Caco-2 (cell line): ENCODE measurements at regions of chr3 and their contacts with region 1.

Region 1: GRCh38 chr3:186614597-186615483 is 2.0 kb downstream of the AHSG start:
- DNase-seq: peak; percentile 75 to 87
- H3K4me3 ChIP-seq: peak overlapping the region; percentile 33
- H3K4me3 Mint-ChIP-seq: peak overlapping the region; percentile 6
- H3K27ac Mint-ChIP-seq: peak overlapping the region; percentile 6
- H3K4me1 ChIP-seq: peaks cover 14% of the 10 kb centered on the region; the same call in 1 of the 2 replicates
- H3K4me1 Mint-ChIP-seq: peaks cover 26% of the 10 kb centered on the region
- H3K27me3 ChIP-seq: no peaks in the 10 kb centered on the region
- H3K27me3 Mint-ChIP-seq: no peaks in the 10 kb centered on the region
- CTCF ChIP-seq: peak; percentile 93 to 94

Region 2: GRCh38 chr3:186589121-186589520 is 25.7 kb before region 1 on chr3:
- CTCF ChIA-PET with region 1: interaction called, 21 read pairs
- POLR2A ChIA-PET with region 1: no interaction called
- intact Hi-C with region 1: loop called (anchors 1 kb)
- DNase-seq: peak in 1 of 2 experiments; percentile 43
- H3K4me3 ChIP-seq: no peak overlapping the region
- H3K4me3 Mint-ChIP-seq: no peak overlapping the region
- H3K27ac Mint-ChIP-seq: peak overlapping the region; percentile 71
- H3K4me1 ChIP-seq: peaks cover 54% of the 10 kb centered on the region
- H3K4me1 Mint-ChIP-seq: peaks cover 19% of the 10 kb centered on the region
- H3K27me3 ChIP-seq: no peaks in the 10 kb centered on the region
- H3K27me3 Mint-ChIP-seq: no peaks in the 10 kb centered on the region
- CTCF ChIP-seq: peak; percentile 40 to 56

Region 3: DNA sequence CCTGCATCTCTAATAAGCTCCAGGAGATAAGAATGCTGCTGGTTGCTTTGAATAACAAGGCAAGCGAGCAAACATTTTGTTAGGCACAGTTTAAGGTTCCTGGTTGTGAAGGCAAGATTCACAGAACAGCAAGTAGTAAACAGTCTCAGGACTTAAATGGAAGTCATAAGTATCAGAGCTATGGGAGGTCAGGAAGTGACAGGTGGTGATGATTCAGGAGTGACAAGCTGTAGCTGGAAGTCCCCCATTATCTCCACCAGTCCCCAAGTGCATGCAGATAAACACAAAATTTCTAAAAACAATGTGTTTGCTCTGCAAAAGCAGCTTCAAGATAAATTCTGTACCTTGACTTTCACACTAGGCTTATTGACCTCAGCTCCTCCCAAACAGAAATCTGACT is 28.7 kb after region 1 on chr3:
- CTCF ChIA-PET with region 1: no interaction called
- POLR2A ChIA-PET with region 1: no interaction called
- intact Hi-C with region 1: no loop called
- DNase-seq: no peak
- H3K4me3 ChIP-seq: no peak overlapping the region
- H3K4me3 Mint-ChIP-seq: no peak overlapping the region
- H3K27ac Mint-ChIP-seq: no peak overlapping the region
- H3K4me1 ChIP-seq: no peaks in the 10 kb centered on the region
- H3K4me1 Mint-ChIP-seq: no peaks in the 10 kb centered on the region
- H3K27me3 ChIP-seq: no peaks in the 10 kb centered on the region
- H3K27me3 Mint-ChIP-seq: no peaks in the 10 kb centered on the region
- CTCF ChIP-seq: no peak

Region 4: GRCh38 chr3:186679151-186679550 is 64.3 kb after region 1 on chr3:
- CTCF ChIA-PET with region 1: interaction called, 12 read pairs
- POLR2A ChIA-PET with region 1: no interaction called
- intact Hi-C with region 1: no loop called
- DNase-seq: no peak
- H3K4me3 ChIP-seq: no peak overlapping the region
- H3K4me3 Mint-ChIP-seq: no peak overlapping the region
- H3K27ac Mint-ChIP-seq: no peak overlapping the region
- H3K4me1 ChIP-seq: peaks cover 17% of the 10 kb centered on the region
- H3K4me1 Mint-ChIP-seq: peaks cover 14% of the 10 kb centered on the region
- H3K27me3 ChIP-seq: no peaks in the 10 kb centered on the region
- H3K27me3 Mint-ChIP-seq: no peaks in the 10 kb centered on the region
- CTCF ChIP-seq: no peak

Region 5: GRCh38 chr3:186754006-186754405 is 139.2 kb after region 1 on chr3:
- CTCF ChIA-PET with region 1: interaction called, 14 read pairs
- POLR2A ChIA-PET with region 1: no interaction called
- intact Hi-C with region 1: loop called (anchors 1 kb)
- DNase-seq: no peak
- H3K4me3 ChIP-seq: no peak overlapping the region
- H3K4me3 Mint-ChIP-seq: no peak overlapping the region
- H3K27ac Mint-ChIP-seq: no peak overlapping the region
- H3K4me1 ChIP-seq: peaks cover 6% of the 10 kb centered on the region; the same call in 1 of the 2 replicates
- H3K4me1 Mint-ChIP-seq: no peaks in the 10 kb centered on the region
- H3K27me3 ChIP-seq: no peaks in the 10 kb centered on the region
- H3K27me3 Mint-ChIP-seq: no peaks in the 10 kb centered on the region
- CTCF ChIP-seq: no peak